CD4-positive, alpha-beta T cell (primary cell): ENCODE measurements at regions of chr9 and their contacts with region 1.

Region 1: GRCh38 chr9:133459476-133460404 is at the start of gene CACFD1:
- DNase-seq: peak; percentile 83 to 97 (median 90)
- ATAC-seq: peak; percentile 80
- H3K4me3 ChIP-seq: peak within 1 kb of the TSS; percentile 69
- H3K4me3 Mint-ChIP-seq: peak within 1 kb of the TSS; percentile 95
- H3K27ac ChIP-seq: peak within 1 kb of the TSS; percentile 52 to 82
- H3K27ac Mint-ChIP-seq: peak within 1 kb of the TSS; percentile 97
- H3K4me1 ChIP-seq: peaks cover 18% of the 10 kb centered on the region
- H3K4me1 Mint-ChIP-seq: peaks cover 23% of the 10 kb centered on the region
- H3K27me3 ChIP-seq: no peaks in the 10 kb centered on the region
- H3K27me3 Mint-ChIP-seq: no peaks in the 10 kb centered on the region
- CTCF ChIP-seq: no peak
- total RNA-seq, gene CACFD1: 3.7 to 3.8 TPM

Region 2: DNA sequence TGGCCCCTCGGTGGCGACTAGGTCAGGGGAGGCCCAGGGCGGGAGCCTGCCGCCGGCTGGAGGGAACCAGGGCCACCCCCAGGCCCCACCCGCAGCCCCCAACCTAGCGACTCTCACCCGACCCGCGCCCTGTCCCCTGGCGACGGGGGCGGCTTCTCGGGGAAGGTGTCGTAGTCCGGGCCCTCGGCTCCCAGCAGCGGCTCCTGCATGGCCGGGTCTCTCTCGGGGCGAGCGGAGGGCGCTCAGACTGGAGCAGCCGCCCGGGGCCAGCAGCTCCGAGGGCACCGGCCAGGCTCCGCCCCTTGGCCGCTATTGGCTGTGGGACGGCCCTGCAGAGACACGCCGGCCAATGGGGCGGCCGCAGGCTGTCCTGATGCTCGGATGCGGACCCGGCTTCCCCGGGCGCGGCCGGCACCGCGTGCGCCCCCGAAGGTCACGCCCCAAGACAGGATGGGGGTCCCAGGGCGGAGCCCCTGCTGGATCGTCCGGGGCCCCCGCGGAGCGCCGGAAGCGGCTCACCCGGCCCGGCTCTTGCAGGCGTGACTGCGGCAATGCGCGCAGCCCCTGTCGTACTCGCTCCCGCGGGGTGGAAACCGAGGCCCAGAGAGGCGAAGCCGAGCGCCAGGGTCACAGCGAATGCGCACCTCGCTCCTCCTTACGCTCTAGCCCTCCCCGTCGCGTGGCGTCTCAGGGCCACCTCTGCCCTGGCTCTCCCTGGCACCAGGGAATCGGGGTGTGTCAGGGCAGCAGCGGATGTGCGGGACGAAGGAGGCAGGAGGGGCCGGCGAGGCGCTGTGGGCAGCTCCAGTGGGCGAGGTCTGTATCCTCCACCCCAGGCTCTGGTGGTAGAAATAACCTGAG is 19.3 kb after region 1 on chr9 and contains the start of gene SLC2A6:
- CTCF ChIA-PET with region 1: interaction called, 3 read pairs
- POLR2A ChIA-PET with region 1: no interaction called
- intact Hi-C with region 1: loop called in 1 of 2 experiments (anchors 1 kb)
- DNase-seq: peak; percentile 56 to 90 (median 74)
- ATAC-seq: peak; percentile 97
- H3K4me3 ChIP-seq: peak within 1 kb of the TSS; percentile 57
- H3K4me3 Mint-ChIP-seq: peak within 1 kb of the TSS; percentile 78
- H3K27ac ChIP-seq: no peak within 1 kb of the TSS
- H3K27ac Mint-ChIP-seq: peak within 1 kb of the TSS; percentile 14
- H3K4me1 ChIP-seq: peaks cover 24% of the 10 kb centered on the region
- H3K4me1 Mint-ChIP-seq: peaks cover 9% of the 10 kb centered on the region
- H3K27me3 ChIP-seq: no peaks in the 10 kb centered on the region
- H3K27me3 Mint-ChIP-seq: no peaks in the 10 kb centered on the region
- CTCF ChIP-seq: no peak
- total RNA-seq, gene SLC2A6: 1.8 to 3.2 TPM